ENCODE measurements at regions of chr4 and their contacts with region 1.

Region 1: DNA sequence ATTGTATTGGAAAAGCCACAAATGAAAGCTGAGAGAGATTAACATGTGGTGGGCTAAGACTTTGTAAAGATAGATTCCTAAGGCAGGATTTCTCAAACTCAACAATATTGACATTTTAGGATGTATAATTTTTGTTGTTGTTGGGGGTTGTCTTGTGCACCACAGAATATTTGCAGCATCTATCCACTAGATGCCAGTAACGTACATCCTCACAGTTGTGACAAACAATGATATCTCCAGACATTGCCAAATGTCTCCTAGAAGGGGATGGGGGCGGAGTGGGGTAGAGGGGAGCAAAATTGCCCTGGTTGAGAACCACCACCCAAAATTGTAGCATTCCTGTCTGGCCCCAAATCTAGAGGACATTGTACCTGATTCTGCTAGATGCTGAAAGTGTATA is 14.7 kb upstream of the CBR4 start:
- DNase-seq: no peak
- H3K4me3 ChIP-seq: no peak overlapping the region
- H3K27ac ChIP-seq: no peak overlapping the region
- H3K4me1 ChIP-seq: no peaks in the 10 kb centered on the region
- H3K27me3 ChIP-seq: no peaks in the 10 kb centered on the region
- CTCF ChIP-seq: peak; percentile 51

Region 2: DNA sequence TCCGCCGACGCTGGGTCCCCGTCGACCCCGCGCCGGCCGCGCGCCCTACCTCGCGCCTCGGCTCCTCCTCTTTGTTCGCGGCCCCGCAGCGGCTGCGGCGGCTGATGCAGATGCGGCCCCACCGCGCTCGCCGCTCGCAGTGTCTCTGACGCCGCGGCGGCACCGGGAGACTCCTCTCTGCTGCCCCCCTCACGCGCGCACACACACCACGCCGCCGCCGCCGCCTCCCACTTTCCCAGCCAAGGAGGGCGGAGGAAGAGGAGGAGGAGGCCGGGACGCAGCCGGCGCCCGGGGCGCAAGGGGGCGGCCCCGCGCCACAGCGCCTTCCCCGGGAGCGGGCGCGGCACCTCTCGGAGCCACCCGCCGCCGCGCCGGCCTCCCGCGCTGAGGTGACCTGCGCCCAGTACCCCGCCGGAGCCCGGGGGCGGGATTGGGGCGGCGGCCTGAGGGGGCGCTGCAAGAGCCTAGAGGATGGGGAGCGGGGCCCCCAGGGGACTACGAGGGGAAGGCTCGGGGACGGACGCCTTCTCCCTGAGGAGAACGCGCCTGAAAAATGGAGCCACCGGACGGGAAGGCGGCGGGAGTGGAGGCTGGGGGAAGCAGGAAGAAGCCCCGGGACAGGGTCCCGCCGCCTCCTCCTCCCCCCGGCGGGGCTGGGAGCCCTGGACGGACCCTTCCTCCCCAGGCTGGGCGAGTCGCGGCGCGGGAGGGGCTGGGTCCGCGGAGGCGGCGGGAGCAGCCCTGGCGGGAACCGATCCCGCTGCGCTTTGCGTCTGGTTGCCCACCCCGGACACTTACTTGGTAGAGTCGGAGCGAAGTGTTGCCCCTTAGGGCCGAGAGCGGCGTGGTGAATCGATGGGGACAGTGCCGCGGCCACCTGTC is 246.3 kb after region 1 on chr4 and contains the start of gene SH3RF1:
- intact Hi-C with region 1: loop called (anchors 10 kb)
- DNase-seq: peak; percentile 89
- H3K4me3 ChIP-seq: peak within 1 kb of the TSS; percentile 91
- H3K27ac ChIP-seq: peak within 1 kb of the TSS; percentile 93
- H3K4me1 ChIP-seq: no peaks in the 10 kb centered on the region
- H3K27me3 ChIP-seq: no peaks in the 10 kb centered on the region
- CTCF ChIP-seq: peak; percentile 8
- total RNA-seq, gene SH3RF1: 50.2 to 77.1 TPM